ENCODE measurements at regions of chr1 and their contacts with region 1.

Region 1: DNA sequence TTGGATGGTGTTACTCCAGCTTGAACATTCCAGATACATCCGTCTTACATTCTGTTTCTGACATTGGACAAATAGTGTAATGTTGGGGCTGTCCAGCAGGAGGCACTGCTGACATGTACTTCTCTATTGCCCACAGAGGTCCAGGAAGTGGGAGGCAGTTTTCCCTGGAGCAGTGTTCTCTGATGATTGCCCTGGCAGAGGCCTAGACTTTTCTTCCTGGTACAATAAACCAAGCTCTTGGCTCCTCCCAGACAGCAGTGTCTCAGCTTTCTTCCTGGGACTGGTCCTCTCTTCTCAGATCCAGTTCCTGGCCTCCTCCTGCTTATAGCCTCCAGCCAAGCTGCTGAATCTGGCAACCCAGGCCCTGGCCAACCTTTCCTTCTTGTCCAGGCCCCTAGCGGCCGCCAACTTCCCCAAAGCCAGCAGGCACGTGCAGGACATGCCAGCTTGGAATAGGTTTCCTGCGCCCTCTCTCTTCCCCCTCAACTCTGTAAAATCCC is 14.9 kb upstream of the IFNLR1 start:
- DNase-seq: no peak
- H3K4me3 ChIP-seq: no peak overlapping the region
- H3K27ac ChIP-seq: peak overlapping the region in 1 of 8 donors; percentile 17
- H3K4me1 ChIP-seq: peaks cover 0 to 46% (median 13%) of the 10 kb centered on the region in 6 donors
- H3K27me3 ChIP-seq: peaks cover 0 to 22% (median 0%) of the 10 kb centered on the region in 7 donors
- CTCF ChIP-seq: peak; percentile 53 to 87 (median 73)
- POLR2A ChIP-seq: no peak

Region 2: DNA sequence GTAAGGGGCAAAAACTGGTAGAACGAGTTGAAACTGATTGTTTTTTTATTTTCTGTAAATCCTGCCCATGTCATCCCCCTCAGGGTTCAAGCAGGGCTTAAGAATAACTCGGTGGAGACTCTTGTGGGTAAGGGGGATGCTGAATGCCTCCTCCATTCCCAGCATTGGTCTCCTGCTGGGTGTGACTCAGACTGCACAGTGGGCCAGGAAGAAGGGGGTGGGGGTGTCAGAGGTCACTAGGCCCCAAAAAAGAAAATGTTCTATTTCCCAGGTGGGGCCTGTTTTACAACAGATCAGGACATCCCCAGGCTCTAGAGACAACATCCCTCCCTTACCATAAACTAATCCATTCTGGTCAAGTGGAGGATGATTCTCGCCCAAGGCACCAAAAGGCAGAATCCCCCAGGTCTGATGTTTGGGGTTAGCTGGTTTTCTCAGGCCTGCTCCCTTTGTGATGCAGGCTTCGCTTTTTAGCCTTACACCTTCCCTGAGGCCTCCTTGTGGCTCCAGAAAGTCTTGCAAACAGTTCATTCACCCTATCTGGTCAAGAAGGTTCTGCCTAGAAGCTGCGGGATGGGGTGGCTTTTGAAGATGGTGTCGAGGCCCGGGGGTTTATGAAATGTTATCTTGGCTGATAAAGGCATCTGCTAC is 106.5 kb after region 1 on chr1:
- intact Hi-C with region 1: no loop called
- DNase-seq: no peak
- H3K4me3 ChIP-seq: no peak overlapping the region
- H3K27ac ChIP-seq: no peak overlapping the region
- H3K4me1 ChIP-seq: no peaks in the 10 kb centered on the region
- H3K27me3 ChIP-seq: peaks cover 0 to 20% (median under 1%) of the 10 kb centered on the region in 7 donors
- CTCF ChIP-seq: no peak
- POLR2A ChIP-seq: no peak

Region 3: DNA sequence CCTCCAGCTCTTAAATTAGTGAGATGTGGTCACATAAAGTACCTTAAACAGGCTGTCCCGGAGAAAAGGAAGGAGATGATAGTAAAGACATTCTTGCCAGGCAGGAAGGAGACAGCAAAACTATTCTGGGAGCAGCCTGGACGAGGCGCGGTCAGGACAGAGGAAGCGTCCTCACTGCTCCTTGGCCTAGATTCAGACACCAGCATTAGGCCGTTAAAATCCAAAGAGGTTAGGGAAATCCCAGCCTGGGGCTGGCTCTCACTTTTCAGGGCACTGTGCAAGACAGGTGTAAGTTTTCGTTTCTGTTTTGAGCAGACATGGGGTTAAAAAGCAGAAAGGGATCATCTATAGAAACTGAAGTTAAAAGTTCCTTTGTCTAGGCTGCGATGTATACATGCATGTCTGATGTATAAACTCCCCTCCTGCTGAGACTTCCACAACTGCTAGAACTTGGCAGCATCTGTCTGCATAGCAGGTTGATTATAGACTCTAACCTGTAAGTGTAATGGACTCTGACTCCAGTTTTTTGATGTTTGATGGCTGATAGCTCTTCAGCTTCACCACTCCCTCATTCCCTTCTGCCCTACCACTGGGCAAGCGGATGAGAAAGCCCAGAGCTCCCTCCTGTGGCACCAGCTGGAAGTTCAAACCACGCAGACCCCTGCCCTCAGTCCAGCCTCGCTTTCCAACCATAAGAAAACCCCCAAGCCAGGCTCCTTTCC is 190.1 kb after region 1 on chr1:
- intact Hi-C with region 1: loop called (anchors 2 kb)
- DNase-seq: peak; percentile 82
- H3K4me3 ChIP-seq: peak overlapping the region in 4 of 8 donors; percentile 0 to 44 (median 9)
- H3K27ac ChIP-seq: peak overlapping the region; percentile 70 to 86 (median 74)
- H3K4me1 ChIP-seq: peaks cover 8 to 44% (median 32%) of the 10 kb centered on the region in 6 donors
- H3K27me3 ChIP-seq: no peaks in the 10 kb centered on the region
- CTCF ChIP-seq: peak; percentile 48 to 84 (median 78)
- POLR2A ChIP-seq: no peak

Region 4: DNA sequence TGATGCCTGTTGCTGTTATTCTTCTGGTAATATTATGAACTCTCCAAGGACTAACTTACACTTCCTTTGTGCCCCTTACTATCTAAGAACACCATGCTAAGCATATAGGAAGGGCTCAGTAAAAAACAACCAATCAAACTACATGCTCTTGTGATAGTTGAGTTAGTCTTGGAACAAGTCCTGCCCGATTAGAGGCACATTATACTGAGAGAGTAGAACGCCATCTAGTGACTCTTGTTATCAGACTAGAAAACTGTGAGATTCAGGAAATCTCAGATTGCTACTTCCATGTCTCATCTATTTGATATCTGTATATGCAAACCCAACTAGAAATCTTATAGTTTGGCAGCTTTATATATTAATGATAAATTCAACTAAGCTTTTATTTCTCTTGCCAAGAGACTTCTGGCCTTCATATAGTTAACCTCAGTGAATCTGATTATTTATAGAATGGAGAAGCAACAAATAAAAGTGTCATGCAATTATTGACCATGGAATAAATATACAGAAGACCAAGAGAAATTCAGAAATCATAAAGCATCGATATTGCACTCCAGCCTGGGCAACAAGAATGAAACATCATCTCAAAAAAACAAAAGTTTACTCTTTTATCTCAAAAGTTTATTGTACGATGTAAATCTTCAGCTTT is 433.3 kb after region 1 on chr1:
- intact Hi-C with region 1: loop called (anchors 10 kb)
- DNase-seq: no peak
- H3K4me3 ChIP-seq: no peak overlapping the region
- H3K27ac ChIP-seq: no peak overlapping the region
- H3K4me1 ChIP-seq: peaks cover 0 to 8% (median 0%) of the 10 kb centered on the region in 6 donors
- H3K27me3 ChIP-seq: peaks cover 0 to 7% (median 0%) of the 10 kb centered on the region in 7 donors
- CTCF ChIP-seq: peak in 9 of 11 experiments; percentile 32 to 61 (median 53)
- POLR2A ChIP-seq: no peak